ENCODE measurements at regions of chr7 and their contacts with region 1.

Region 1: GRCh38 chr7:108034586-108034985 is 31.6 kb upstream of the LAMB1 start:
- DNase-seq: no peak
- ATAC-seq: no peak
- H3K4me3 ChIP-seq: no peak overlapping the region
- H3K27ac ChIP-seq: no peak overlapping the region
- H3K4me1 ChIP-seq: peaks cover 6 to 12% of the 10 kb centered on the region in 2 experiments; a peak in 4 of 5 replicates
- H3K27me3 ChIP-seq: no peaks in the 10 kb centered on the region
- CTCF ChIP-seq: no peak
- EP300 ChIP-seq: no peak
- POLR2A ChIP-seq: no peak
- RAD21 ChIP-seq: no peak

Region 2: GRCh38 chr7:108009873-108010272 is 24.7 kb before region 1 on chr7:
- CTCF ChIA-PET with region 1: no interaction called
- POLR2A ChIA-PET with region 1: interaction called, 3 read pairs
- in situ Hi-C with region 1: no loop called
- intact Hi-C with region 1: loop called (anchors 2 kb)
- DNase-seq: no peak
- ATAC-seq: no peak
- H3K4me3 ChIP-seq: no peak overlapping the region
- H3K27ac ChIP-seq: no peak overlapping the region
- H3K4me1 ChIP-seq: peaks cover 5 to 20% of the 10 kb centered on the region in 2 experiments
- H3K27me3 ChIP-seq: no peaks in the 10 kb centered on the region; a peak in 1 of 5 replicates
- CTCF ChIP-seq: no peak
- EP300 ChIP-seq: no peak
- POLR2A ChIP-seq: no peak
- RAD21 ChIP-seq: no peak

Region 3: GRCh38 chr7:108094933-108095710 is 60.5 kb after region 1 on chr7:
- CTCF ChIA-PET with region 1: no interaction called
- POLR2A ChIA-PET with region 1: interaction called, 3 read pairs
- in situ Hi-C with region 1: no loop called
- intact Hi-C with region 1: loop called (anchors 5 kb)
- DNase-seq: no peak
- ATAC-seq: peak; percentile 45
- H3K4me3 ChIP-seq: no peak overlapping the region
- H3K27ac ChIP-seq: no peak overlapping the region
- H3K4me1 ChIP-seq: peaks cover 14 to 31% of the 10 kb centered on the region in 2 experiments
- H3K27me3 ChIP-seq: no peaks in the 10 kb centered on the region
- CTCF ChIP-seq: no peak
- EP300 ChIP-seq: no peak
- POLR2A ChIP-seq: no peak
- RAD21 ChIP-seq: no peak

Region 4: DNA sequence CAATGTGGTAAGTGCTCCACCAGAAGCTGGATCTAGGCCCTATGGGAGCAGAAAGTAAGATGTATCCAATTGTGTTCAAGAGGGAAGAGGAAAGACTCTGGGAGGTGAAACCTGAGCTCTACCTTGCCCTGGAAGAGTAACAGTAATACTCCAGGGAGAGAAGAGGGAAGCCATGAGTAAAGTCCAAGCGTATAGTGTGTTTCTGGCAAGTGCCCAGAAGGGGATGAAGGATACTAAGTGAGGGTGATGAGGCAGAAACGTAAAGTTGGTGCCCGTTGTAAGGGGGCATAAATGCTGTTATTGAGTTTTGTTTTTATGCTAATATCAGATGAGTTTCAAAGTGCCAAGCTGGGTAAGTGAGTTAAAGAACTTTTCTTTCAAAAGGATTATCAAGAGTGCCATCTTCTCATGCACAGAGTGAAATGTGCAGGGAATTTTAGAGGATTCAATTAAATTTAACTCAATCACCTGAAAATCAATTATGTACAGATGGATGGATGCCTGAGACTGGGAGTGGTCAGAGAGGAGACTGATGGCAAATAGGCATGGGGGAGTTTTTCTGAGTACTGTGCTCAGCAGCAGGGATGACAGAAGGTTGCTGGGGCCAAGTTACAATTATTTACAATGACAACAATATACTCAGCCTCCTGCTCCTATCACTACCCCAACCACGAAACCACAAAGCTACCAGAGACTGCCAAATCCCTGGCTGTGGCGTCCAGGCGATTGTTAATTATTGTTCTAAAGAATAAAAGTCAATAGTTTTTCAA is 218.9 kb after region 1 on chr7:
- CTCF ChIA-PET with region 1: no interaction called
- POLR2A ChIA-PET with region 1: no interaction called
- in situ Hi-C with region 1: no loop called
- intact Hi-C with region 1: no loop called
- DNase-seq: no peak
- ATAC-seq: peak; percentile 51
- H3K4me3 ChIP-seq: no peak overlapping the region
- H3K27ac ChIP-seq: no peak overlapping the region
- H3K4me1 ChIP-seq: peaks cover 0 to 17% of the 10 kb centered on the region in 2 experiments; a peak in 2 of 5 replicates
- H3K27me3 ChIP-seq: no peaks in the 10 kb centered on the region
- CTCF ChIP-seq: no peak
- EP300 ChIP-seq: no peak
- POLR2A ChIP-seq: no peak
- RAD21 ChIP-seq: no peak

Measured in K562 (cell line).